MCF 10A (cell line): ENCODE measurements at regions of chr14 and their contacts with region 1.

Region 1: GRCh38 chr14:77124345-77125280 is 17.0 kb downstream of the ZDHHC22 start:
- DNase-seq: no peak
- H3K4me3 Mint-ChIP-seq: no peak overlapping the region
- H3K27ac Mint-ChIP-seq: no peak overlapping the region
- H3K4me1 Mint-ChIP-seq: peaks cover 33% of the 10 kb centered on the region
- H3K27me3 Mint-ChIP-seq: no peaks in the 10 kb centered on the region
- CTCF ChIP-seq: no peak

Region 2: DNA sequence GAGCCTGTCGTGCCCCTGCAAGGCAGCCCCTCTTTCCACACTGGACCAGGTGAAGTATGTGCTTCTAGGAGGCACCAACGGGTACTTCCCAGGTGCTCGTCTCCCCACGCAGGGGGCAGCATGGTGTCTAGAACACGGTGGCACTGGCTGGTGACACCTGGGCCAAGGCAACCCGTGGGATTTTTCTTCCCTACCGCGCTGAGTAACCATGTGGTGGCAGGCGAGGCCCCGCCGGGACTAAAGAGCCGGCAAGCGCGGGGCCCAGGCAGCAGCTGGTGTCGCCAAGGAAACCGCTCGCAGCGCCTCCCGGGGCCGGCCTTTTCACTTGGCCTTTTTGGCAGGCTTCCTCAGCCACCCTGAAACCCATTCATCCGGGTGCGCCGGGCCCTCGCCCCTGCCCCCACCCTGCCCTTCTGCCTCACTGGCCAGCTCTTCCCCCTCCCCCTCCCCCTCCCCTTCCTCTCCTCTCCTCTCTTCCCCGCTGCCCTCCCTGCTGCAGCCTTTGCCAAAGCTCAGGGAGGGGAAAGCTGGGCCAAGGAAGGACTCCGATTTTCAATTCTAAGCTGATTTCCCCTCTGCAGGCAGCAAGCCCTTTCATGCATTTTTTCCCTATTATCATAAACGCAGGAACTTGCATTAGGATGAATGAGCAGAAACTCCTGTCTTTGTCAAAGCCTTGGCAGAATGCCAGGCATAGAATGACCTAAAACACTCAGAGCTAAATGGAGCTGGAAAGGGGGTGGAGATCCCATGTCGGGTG is 177.4 kb before region 1 on chr14:
- CTCF ChIA-PET with region 1: no interaction called
- POLR2A ChIA-PET with region 1: no interaction called
- intact Hi-C with region 1: no loop called
- DNase-seq: peak; percentile 88
- H3K4me3 Mint-ChIP-seq: peak overlapping the region; percentile 31
- H3K27ac Mint-ChIP-seq: peak overlapping the region; percentile 94
- H3K4me1 Mint-ChIP-seq: peaks cover 28% of the 10 kb centered on the region
- H3K27me3 Mint-ChIP-seq: no peaks in the 10 kb centered on the region
- CTCF ChIP-seq: peak; percentile 31

Region 3: DNA sequence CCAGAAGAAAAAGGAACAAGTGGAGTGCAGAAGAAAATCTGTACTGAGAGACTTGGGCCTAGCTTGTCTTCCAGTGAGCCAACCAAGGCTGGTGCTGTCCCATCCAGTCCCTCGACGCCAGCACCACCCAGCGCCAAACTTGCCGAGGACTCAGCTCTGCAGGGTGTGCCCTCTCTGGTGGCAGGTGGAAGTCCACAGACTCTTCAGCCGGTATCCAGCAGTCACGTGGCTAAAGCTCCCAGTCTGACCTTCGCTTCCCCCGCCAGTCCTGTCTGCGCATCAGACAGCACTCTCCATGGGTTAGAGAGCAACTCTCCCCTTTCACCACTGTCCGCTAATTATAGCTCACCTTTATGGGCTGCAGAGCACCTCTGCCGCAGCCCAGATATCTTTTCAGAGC is 11.0 kb before region 1 on chr14:
- CTCF ChIA-PET with region 1: interaction called, 5 read pairs
- POLR2A ChIA-PET with region 1: interaction called, 12 read pairs
- intact Hi-C with region 1: no loop called
- DNase-seq: no peak
- H3K4me3 Mint-ChIP-seq: no peak overlapping the region
- H3K27ac Mint-ChIP-seq: no peak overlapping the region
- H3K4me1 Mint-ChIP-seq: no peaks in the 10 kb centered on the region
- H3K27me3 Mint-ChIP-seq: no peaks in the 10 kb centered on the region
- CTCF ChIP-seq: no peak

Region 4: GRCh38 chr14:77598366-77599070 is 473.9 kb after region 1 on chr14:
- CTCF ChIA-PET with region 1: no interaction called
- POLR2A ChIA-PET with region 1: no interaction called
- intact Hi-C with region 1: no loop called
- DNase-seq: no peak
- H3K4me3 Mint-ChIP-seq: peak overlapping the region; percentile 3
- H3K27ac Mint-ChIP-seq: no peak overlapping the region
- H3K4me1 Mint-ChIP-seq: peaks cover 30% of the 10 kb centered on the region
- H3K27me3 Mint-ChIP-seq: no peaks in the 10 kb centered on the region
- CTCF ChIP-seq: no peak